MCF 10A (cell line): ENCODE measurements at regions of chr1 and their contacts with region 1.

Region 1: GRCh38 chr1:88180449-88181108 is 503.5 kb upstream of the PKN2 start:
- DNase-seq: peak; percentile 77
- H3K4me3 Mint-ChIP-seq: no peak overlapping the region
- H3K27ac Mint-ChIP-seq: no peak overlapping the region
- H3K4me1 Mint-ChIP-seq: peaks cover 6% of the 10 kb centered on the region
- H3K27me3 Mint-ChIP-seq: peaks cover 47% of the 10 kb centered on the region
- CTCF ChIP-seq: peak; percentile 89

Region 2: GRCh38 chr1:88169939-88170338 is 10.6 kb before region 1 on chr1:
- CTCF ChIA-PET with region 1: interaction called, 10 read pairs
- POLR2A ChIA-PET with region 1: interaction called, 5 read pairs
- intact Hi-C with region 1: no loop called
- DNase-seq: no peak
- H3K4me3 Mint-ChIP-seq: no peak overlapping the region
- H3K27ac Mint-ChIP-seq: no peak overlapping the region
- H3K4me1 Mint-ChIP-seq: no peaks in the 10 kb centered on the region
- H3K27me3 Mint-ChIP-seq: peaks cover 44% of the 10 kb centered on the region
- CTCF ChIP-seq: no peak

Region 3: GRCh38 chr1:88302843-88303486 is 122.4 kb after region 1 on chr1:
- CTCF ChIA-PET with region 1: interaction called, 11 read pairs
- POLR2A ChIA-PET with region 1: interaction called, 3 read pairs
- intact Hi-C with region 1: loop called (anchors 1 kb)
- DNase-seq: peak; percentile 29
- H3K4me3 Mint-ChIP-seq: no peak overlapping the region
- H3K27ac Mint-ChIP-seq: no peak overlapping the region
- H3K4me1 Mint-ChIP-seq: no peaks in the 10 kb centered on the region
- H3K27me3 Mint-ChIP-seq: peaks cover 27% of the 10 kb centered on the region
- CTCF ChIP-seq: peak; percentile 40

Region 4: DNA sequence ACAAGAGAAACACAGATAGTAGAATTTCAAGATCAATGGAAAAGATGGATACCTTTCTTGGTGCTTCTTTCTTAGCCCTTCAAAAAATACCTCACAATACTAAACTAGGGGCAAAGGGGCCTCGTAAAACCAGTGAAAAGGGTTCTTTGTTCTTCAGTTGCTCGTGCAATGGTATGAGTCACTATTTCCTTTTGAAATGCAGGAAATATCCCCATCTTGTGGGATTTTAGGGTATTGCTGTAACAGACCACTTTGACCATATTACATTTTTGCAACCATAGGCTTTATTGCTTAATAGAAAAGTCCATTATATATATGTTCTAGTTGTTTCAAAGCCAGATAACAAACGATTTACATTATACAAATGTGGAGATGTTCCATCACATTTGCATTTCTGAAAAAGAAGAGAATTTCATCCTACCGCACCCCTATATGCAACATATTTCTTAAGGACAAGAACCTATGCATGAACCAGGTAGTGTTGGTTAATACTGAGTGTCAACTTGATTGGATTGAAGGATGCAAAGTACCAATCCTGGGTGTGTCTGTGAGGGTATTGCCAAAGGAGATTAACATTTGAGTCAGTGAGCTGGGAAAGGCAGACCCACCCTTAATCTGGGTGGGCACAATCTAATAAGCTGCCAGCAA is 414.9 kb after region 1 on chr1:
- CTCF ChIA-PET with region 1: no interaction called
- POLR2A ChIA-PET with region 1: no interaction called
- intact Hi-C with region 1: loop called (anchors 5 kb)
- DNase-seq: no peak
- H3K4me3 Mint-ChIP-seq: no peak overlapping the region
- H3K27ac Mint-ChIP-seq: no peak overlapping the region
- H3K4me1 Mint-ChIP-seq: no peaks in the 10 kb centered on the region
- H3K27me3 Mint-ChIP-seq: no peaks in the 10 kb centered on the region
- CTCF ChIP-seq: peak; percentile 28